Posterior vena cava (tissue), 2 donors: ENCODE measurements at regions of chr12 and their contacts with region 1.

Region 1: GRCh38 chr12:46843811-46844210 is 18.0 kb upstream of the SLC38A4 start:
- DNase-seq: no peak

Region 2: DNA sequence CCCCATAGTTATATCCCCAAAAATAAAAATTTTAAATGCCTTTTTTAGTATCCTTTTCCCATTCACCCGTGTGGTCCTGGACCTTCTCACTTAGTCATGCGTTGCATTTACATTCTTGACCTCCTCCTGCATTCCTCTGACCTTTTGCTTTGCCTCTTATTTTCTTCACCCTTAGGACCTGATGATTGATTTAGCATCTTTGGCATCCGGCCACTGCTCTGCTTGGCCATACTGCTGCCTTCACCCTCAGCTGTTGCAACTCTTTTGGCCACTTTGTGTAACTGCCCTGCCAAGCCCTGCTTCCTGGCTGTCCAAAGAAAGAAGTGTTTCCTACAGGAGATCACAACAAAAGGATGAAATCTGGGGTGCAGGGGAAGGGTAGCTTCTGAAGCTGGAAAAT is 30.8 kb after region 1 on chr12:
- intact Hi-C with region 1: loop called in 1 of 2 experiments (anchors 1 kb)
- DNase-seq: no peak